H1 (cell line): ENCODE measurements at regions of chr3 and their contacts with region 1.

Region 1: DNA sequence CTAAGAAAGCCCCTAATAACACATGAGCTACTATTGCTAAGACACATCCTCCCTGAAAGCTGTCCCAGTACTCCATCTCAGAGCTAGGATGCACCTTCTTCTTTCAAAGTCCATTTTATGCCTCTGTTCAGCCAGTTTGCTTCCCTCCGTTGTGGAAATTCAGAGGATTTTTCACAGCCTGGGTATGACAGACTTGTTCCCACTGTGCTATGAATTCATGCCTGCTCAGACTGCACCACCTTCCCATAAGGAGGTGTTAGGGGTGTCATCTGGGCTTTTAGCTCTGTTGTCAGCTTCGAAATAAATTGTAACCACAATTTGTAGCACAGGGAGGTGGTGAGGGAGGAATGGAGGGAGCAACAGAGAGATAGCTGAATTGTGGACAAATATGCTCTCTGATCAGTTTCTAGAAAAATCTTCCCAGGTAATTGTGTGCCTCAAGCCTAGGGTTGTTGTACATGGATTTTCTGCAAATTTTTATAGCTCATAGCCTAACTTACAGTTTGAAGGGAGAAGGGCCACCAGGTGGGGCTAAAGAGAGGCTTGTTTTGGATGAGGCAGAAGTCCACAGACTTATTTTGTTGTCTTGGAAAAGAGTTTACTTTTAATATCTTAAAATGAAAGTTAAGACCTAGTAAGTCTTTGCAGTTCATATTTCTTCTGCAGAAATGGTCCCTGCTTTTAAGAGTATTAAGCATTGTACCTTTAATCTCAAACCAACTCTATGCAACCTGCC is 462.0 kb downstream of the PDCD6IP start:
- DNase-seq: peak in 1 of 2 experiments; percentile 77
- H3K4me3 ChIP-seq: no peak overlapping the region
- H3K27ac ChIP-seq: no peak overlapping the region
- H3K4me1 ChIP-seq: peaks cover 0 to 6% (median 4%) of the 10 kb centered on the region in 4 experiments; a peak in 4 of 7 replicates
- H3K27me3 ChIP-seq: peaks cover 0 to under 1% (median 0%) of the 10 kb centered on the region in 4 experiments; a peak in 1 of 7 replicates
- CTCF ChIP-seq: peak in 2 of 3 experiments; percentile 50 to 55; a peak in 3 of 4 replicates
- EP300 ChIP-seq: no peak
- POLR2A ChIP-seq: no peak
- RAD21 ChIP-seq: peak; percentile 57 to 63

Region 2: GRCh38 chr3:33883538-33883950 is 376.9 kb before region 1 on chr3:
- CTCF ChIA-PET with region 1: interaction called, 23 read pairs
- POLR2A ChIA-PET with region 1: no interaction called
- DNase-seq: no peak
- H3K4me3 ChIP-seq: peak overlapping the region in 1 of 4 experiments; percentile 36; a peak in 1 of 8 replicates
- H3K27ac ChIP-seq: no peak overlapping the region
- H3K4me1 ChIP-seq: peaks cover 3 to 12% (median 6%) of the 10 kb centered on the region in 4 experiments; a peak in 5 of 7 replicates
- H3K27me3 ChIP-seq: no peaks in the 10 kb centered on the region
- CTCF ChIP-seq: peak in 2 of 3 experiments; percentile 32 to 60; a peak in 2 of 4 replicates
- EP300 ChIP-seq: no peak
- POLR2A ChIP-seq: no peak
- RAD21 ChIP-seq: peak; percentile 69 to 75

Region 3: GRCh38 chr3:34237946-34238345 is 22.5 kb before region 1 on chr3:
- CTCF ChIA-PET with region 1: interaction called, 12 read pairs
- POLR2A ChIA-PET with region 1: no interaction called
- DNase-seq: no peak
- H3K4me3 ChIP-seq: no peak overlapping the region
- H3K27ac ChIP-seq: no peak overlapping the region
- H3K4me1 ChIP-seq: no peaks in the 10 kb centered on the region
- H3K27me3 ChIP-seq: no peaks in the 10 kb centered on the region
- CTCF ChIP-seq: no peak
- EP300 ChIP-seq: no peak
- POLR2A ChIP-seq: no peak
- RAD21 ChIP-seq: no peak

Region 4: GRCh38 chr3:34292605-34293300 is 32.3 kb after region 1 on chr3:
- CTCF ChIA-PET with region 1: interaction called, 13 read pairs
- POLR2A ChIA-PET with region 1: no interaction called
- DNase-seq: no peak
- H3K4me3 ChIP-seq: no peak overlapping the region
- H3K27ac ChIP-seq: no peak overlapping the region
- H3K4me1 ChIP-seq: no peaks in the 10 kb centered on the region
- H3K27me3 ChIP-seq: peaks cover 0 to 1% (median 0%) of the 10 kb centered on the region in 4 experiments; a peak in 1 of 7 replicates
- CTCF ChIP-seq: no peak
- EP300 ChIP-seq: no peak
- POLR2A ChIP-seq: no peak
- RAD21 ChIP-seq: no peak

Region 5: GRCh38 chr3:34346656-34347055 is 86.2 kb after region 1 on chr3:
- CTCF ChIA-PET with region 1: no interaction called
- POLR2A ChIA-PET with region 1: no interaction called
- DNase-seq: no peak
- H3K4me3 ChIP-seq: no peak overlapping the region
- H3K27ac ChIP-seq: no peak overlapping the region
- H3K4me1 ChIP-seq: no peaks in the 10 kb centered on the region
- H3K27me3 ChIP-seq: no peaks in the 10 kb centered on the region
- CTCF ChIP-seq: no peak
- EP300 ChIP-seq: no peak
- POLR2A ChIP-seq: no peak
- RAD21 ChIP-seq: no peak

Region 6: DNA sequence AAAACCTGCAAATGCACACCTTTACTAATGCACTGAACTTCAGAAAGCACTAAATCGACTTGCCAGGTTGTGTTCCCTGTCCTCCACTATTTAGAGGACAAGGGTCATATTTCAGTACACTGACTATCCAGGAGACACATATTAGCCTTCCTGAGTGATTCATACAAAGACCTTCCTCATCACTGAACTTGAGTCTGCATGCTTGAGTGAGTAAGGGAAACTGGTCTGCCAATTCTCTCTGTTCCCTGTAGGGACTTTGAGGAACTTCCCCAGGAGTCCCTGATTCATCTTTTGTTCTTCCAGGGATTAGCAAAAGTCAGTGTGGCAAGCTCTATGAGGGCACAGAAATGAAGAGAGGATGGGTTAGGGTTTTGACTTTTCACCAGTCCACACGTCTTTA is 103.9 kb after region 1 on chr3:
- CTCF ChIA-PET with region 1: interaction called, 11 read pairs
- POLR2A ChIA-PET with region 1: no interaction called
- DNase-seq: no peak
- H3K4me3 ChIP-seq: no peak overlapping the region
- H3K27ac ChIP-seq: no peak overlapping the region
- H3K4me1 ChIP-seq: peaks cover 0 to 4% (median 2%) of the 10 kb centered on the region in 4 experiments; a peak in 2 of 7 replicates
- H3K27me3 ChIP-seq: no peaks in the 10 kb centered on the region
- CTCF ChIP-seq: no peak
- EP300 ChIP-seq: no peak
- POLR2A ChIP-seq: no peak
- RAD21 ChIP-seq: 0 out of 4 replicates have a peak, but pooled peaks of 1 of the 2 experiments have one; percentile 4

Region 7: DNA sequence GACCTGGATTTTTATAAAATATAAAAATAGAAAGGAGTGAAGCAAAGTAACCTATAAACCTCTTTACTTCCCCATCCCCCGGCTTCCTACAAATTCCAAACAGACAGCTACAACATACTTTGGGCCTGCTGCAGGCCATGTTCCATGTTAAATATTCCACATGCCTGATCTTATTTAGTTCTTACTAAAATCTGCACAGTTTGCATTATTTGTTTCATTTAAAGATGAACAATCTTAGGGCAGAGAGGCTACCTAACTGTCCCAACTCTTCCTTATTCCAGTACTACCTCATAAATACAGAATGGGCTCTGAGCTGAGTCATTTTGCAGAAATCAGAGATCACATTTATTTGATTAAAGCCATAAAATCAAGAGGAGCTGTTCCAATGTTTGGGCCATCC is 203.0 kb after region 1 on chr3:
- CTCF ChIA-PET with region 1: no interaction called
- POLR2A ChIA-PET with region 1: no interaction called
- DNase-seq: no peak
- H3K4me3 ChIP-seq: no peak overlapping the region
- H3K27ac ChIP-seq: no peak overlapping the region
- H3K4me1 ChIP-seq: no peaks in the 10 kb centered on the region
- H3K27me3 ChIP-seq: no peaks in the 10 kb centered on the region
- CTCF ChIP-seq: no peak
- EP300 ChIP-seq: no peak
- POLR2A ChIP-seq: no peak
- RAD21 ChIP-seq: no peak

Region 8: GRCh38 chr3:34683851-34684250 is 423.4 kb after region 1 on chr3:
- CTCF ChIA-PET with region 1: interaction called, 30 read pairs
- POLR2A ChIA-PET with region 1: no interaction called
- DNase-seq: peak; percentile 41 to 79
- H3K4me3 ChIP-seq: no peak overlapping the region
- H3K27ac ChIP-seq: no peak overlapping the region
- H3K4me1 ChIP-seq: no peaks in the 10 kb centered on the region
- H3K27me3 ChIP-seq: no peaks in the 10 kb centered on the region
- CTCF ChIP-seq: peak; percentile 33 to 83 (median 66)
- EP300 ChIP-seq: no peak
- POLR2A ChIP-seq: no peak
- RAD21 ChIP-seq: peak; percentile 86 to 91